Endothelial cell of umbilical vein (primary cell): ENCODE measurements at regions of chr10 and their contacts with region 1.

Region 1: GRCh38 chr10:21364196-21365114 is 161.0 kb downstream of the SKIDA1 start:
- DNase-seq: peak; percentile 97
- H3K4me3 ChIP-seq: no peak overlapping the region
- H3K27ac ChIP-seq: peak overlapping the region; percentile 96
- H3K4me1 ChIP-seq: peaks cover 40% of the 10 kb centered on the region
- H3K27me3 ChIP-seq: no peaks in the 10 kb centered on the region
- CTCF ChIP-seq: no peak
- POLR2A ChIP-seq: no peak

Region 2: DNA sequence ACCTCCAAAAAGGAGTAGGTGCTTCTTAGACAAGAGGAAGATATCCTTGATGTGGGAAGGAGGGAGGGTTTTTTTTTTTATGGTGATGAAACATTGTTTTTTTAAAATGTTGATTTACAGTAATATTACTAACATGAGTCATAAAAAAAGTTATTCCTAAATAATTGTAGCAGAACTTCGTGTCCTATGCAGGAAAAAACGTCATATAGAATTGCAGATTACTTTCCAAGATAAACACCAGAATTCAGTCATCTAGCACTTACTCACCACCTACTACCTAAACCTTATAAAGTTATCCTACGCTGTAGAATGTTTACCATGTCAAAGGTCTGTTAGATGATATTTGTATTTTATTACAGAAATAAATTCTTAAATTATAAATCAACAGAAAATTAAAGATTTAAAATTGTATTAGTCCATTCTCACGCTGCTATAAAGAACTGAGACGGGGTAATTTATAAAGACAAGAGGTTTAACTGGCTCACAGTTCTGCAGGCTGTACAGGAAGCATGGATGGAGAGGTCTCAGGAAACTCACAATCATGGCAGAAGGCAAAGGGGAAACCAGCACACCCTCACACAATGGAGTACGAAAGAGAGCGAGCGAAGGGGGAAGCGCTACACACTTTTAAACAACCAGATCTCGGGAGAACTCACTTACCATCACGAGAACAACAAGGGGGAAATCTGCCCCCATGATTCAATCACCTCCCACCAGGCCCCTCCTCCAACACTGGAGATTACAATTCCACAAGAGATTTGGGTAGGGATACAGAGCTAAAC is 362.2 kb before region 1 on chr10:
- CTCF ChIA-PET with region 1: no interaction called
- POLR2A ChIA-PET with region 1: no interaction called
- dilution Hi-C with region 1: no loop called
- intact Hi-C with region 1: loop called (anchors 1 kb)
- DNase-seq: peak; percentile 91
- H3K4me3 ChIP-seq: peak overlapping the region in 1 of 3 experiments; percentile 37
- H3K27ac ChIP-seq: peak overlapping the region; percentile 95
- H3K4me1 ChIP-seq: peaks cover 19% of the 10 kb centered on the region
- H3K27me3 ChIP-seq: no peaks in the 10 kb centered on the region
- CTCF ChIP-seq: no peak
- POLR2A ChIP-seq: no peak

Region 3: GRCh38 chr10:21292763-21293517 is 71.5 kb before region 1 on chr10:
- CTCF ChIA-PET with region 1: interaction called, 4 read pairs
- POLR2A ChIA-PET with region 1: no interaction called
- dilution Hi-C with region 1: no loop called
- intact Hi-C with region 1: loop called (anchors 1 kb)
- DNase-seq: peak; percentile 82
- H3K4me3 ChIP-seq: peak overlapping the region; percentile 2 to 57 (median 32)
- H3K27ac ChIP-seq: peak overlapping the region; percentile 83
- H3K4me1 ChIP-seq: peaks cover 19% of the 10 kb centered on the region
- H3K27me3 ChIP-seq: no peaks in the 10 kb centered on the region
- CTCF ChIP-seq: no peak
- POLR2A ChIP-seq: no peak

Region 4: DNA sequence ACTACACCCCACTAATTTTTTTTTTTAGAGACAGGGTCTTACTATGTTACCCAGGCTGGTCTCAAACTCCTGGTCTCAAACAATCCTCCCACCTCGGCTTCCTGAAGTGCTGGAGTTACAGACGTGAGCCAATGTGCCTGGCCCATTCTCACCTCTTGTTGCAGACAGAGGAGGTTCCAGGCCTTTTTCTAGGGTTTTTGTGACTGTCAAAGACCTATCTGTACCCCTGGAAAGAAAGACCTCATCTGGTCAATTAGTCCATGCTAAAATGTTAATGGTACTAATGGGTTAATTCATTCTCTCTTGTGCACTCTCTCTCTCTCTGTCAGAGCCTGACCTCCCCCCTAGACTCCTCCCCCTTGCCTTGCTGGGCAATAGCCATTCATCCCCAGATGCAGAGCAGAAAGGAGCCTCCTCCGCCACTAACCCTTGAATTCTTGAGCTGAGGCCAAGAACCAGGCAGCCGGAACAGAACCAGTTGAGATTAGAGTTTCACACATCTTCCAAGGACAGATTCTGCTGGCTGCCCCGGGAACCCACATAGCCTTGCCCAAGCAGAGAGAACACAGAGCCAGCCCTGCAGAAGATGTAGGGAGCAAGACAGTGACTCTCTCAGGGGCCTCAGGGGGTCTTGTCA is 48.7 kb before region 1 on chr10:
- CTCF ChIA-PET with region 1: interaction called, 3 read pairs
- POLR2A ChIA-PET with region 1: no interaction called
- dilution Hi-C with region 1: no loop called
- intact Hi-C with region 1: loop called (anchors 2 kb)
- DNase-seq: peak; percentile 90
- H3K4me3 ChIP-seq: no peak overlapping the region
- H3K27ac ChIP-seq: peak overlapping the region; percentile 50
- H3K4me1 ChIP-seq: peaks cover 24% of the 10 kb centered on the region
- H3K27me3 ChIP-seq: no peaks in the 10 kb centered on the region
- CTCF ChIP-seq: no peak
- POLR2A ChIP-seq: peak; percentile 31

Region 5: GRCh38 chr10:21336476-21337170 is 27.8 kb before region 1 on chr10:
- CTCF ChIA-PET with region 1: interaction called, 4 read pairs
- POLR2A ChIA-PET with region 1: interaction called, 11 read pairs
- dilution Hi-C with region 1: no loop called
- intact Hi-C with region 1: loop called (anchors 1 kb)
- DNase-seq: peak; percentile 93
- H3K4me3 ChIP-seq: no peak overlapping the region
- H3K27ac ChIP-seq: peak overlapping the region; percentile 97
- H3K4me1 ChIP-seq: peaks cover 22% of the 10 kb centered on the region
- H3K27me3 ChIP-seq: no peaks in the 10 kb centered on the region
- CTCF ChIP-seq: peak; percentile 20 to 28
- POLR2A ChIP-seq: peak; percentile 20

Region 6: GRCh38 chr10:21424459-21424861 is 60.0 kb after region 1 on chr10:
- CTCF ChIA-PET with region 1: no interaction called
- POLR2A ChIA-PET with region 1: no interaction called
- dilution Hi-C with region 1: no loop called
- intact Hi-C with region 1: no loop called
- DNase-seq: no peak
- H3K4me3 ChIP-seq: no peak overlapping the region
- H3K27ac ChIP-seq: no peak overlapping the region
- H3K4me1 ChIP-seq: no peaks in the 10 kb centered on the region
- H3K27me3 ChIP-seq: no peaks in the 10 kb centered on the region
- CTCF ChIP-seq: no peak
- POLR2A ChIP-seq: no peak